GM12878 (cell line): ENCODE measurements at regions of chr7 and their contacts with region 1.

Region 1: GRCh38 chr7:127776776-127777386 is 124.9 kb downstream of the SND1 start:
- DNase-seq: no peak
- ATAC-seq: no peak
- H3K4me3 ChIP-seq: no peak overlapping the region
- H3K27ac ChIP-seq: no peak overlapping the region
- H3K4me1 ChIP-seq: no peaks in the 10 kb centered on the region
- H3K27me3 ChIP-seq: no peaks in the 10 kb centered on the region
- CTCF ChIP-seq: no peak
- EP300 ChIP-seq: no peak
- POLR2A ChIP-seq: no peak
- RAD21 ChIP-seq: no peak

Region 2: DNA sequence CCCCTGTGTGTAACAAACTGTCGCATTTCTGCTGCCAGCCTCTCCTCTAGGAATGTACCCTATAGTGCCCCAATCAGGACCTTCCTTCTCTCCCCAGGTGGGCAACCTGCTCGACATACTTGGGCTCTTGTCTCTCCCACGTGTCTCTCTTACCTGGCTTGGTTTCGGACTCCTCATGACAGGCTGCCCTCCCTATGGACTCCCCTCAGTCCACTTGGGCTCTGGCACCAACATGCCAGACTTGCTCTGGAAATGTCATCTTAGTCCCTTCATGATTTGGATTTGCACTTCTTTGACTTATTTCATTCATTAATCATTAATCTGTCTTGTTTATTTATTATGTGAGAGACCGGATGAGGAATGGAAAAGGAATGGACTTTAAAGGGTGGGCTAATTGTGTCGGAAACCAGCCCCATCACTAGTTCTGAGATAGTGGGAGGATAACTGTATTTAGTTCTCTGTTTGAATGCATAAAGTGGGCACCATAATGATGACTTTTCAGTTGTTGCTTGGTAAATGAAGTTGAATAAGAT is 16.9 kb before region 1 on chr7:
- CTCF ChIA-PET with region 1: interaction called, 10 read pairs
- POLR2A ChIA-PET with region 1: no interaction called
- RAD21 ChIA-PET with region 1: no interaction called
- SMC1A ChIA-PET with region 1: interaction called, 5 read pairs
- in situ Hi-C with region 1: no loop called
- intact Hi-C with region 1: no loop called
- DNase-seq: no peak
- ATAC-seq: no peak
- H3K4me3 ChIP-seq: no peak overlapping the region
- H3K27ac ChIP-seq: no peak overlapping the region
- H3K4me1 ChIP-seq: no peaks in the 10 kb centered on the region
- H3K27me3 ChIP-seq: no peaks in the 10 kb centered on the region
- CTCF ChIP-seq: no peak
- EP300 ChIP-seq: no peak
- POLR2A ChIP-seq: no peak
- RAD21 ChIP-seq: no peak